GM12878 (cell line): ENCODE measurements at regions of chr15 and their contacts with region 1.

Region 1: DNA sequence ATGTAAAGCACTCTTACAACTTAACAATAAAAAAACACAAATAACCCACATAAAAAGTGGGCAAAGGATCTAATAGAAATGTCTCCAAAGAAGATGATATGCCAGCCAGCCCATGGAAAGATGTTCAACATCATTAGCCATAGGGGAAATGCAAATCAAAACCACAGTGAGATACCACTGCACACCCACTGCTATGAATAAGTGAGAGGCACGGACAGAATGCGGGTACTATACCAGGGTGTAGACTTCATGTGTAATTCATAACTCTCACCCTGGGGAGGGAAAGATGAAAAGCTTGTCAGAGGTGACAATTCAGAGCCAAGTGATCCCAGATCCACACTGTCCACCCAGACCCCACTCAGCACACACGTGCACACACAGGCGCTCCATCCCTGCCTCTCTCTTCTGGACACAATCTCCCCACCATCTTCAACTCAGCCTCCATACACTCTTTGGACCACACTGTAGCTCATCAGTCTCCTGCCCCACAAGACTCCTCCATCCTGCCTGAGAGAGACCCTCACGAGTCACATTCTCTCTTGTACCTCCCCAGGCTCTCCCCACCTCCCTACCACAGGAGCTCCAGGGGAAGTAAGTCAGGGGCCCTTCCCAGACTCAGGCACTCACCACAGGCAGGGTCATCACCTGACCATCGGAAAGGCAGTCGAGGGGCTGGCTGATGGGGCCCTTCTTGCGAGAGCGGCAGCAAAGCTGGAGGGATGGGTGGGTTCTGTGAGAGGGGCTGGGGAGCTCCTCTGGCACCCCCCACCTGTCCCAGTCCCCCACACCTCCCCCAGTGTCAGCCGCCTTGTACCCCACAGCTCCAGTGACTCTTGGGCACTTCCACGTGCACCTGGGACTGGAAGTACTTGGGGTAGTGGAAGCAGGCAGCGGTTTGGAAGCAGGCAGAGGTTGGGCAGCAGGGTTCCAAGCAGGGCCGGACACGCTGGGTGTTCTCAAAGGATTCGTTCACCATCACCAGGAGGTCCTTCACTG is 21.3 kb downstream of the PLA2G4E start:
- DNase-seq: no peak
- ATAC-seq: peak; percentile 68
- H3K4me3 ChIP-seq: no peak overlapping the region
- H3K27ac ChIP-seq: no peak overlapping the region
- H3K4me1 ChIP-seq: no peaks in the 10 kb centered on the region
- H3K27me3 ChIP-seq: no peaks in the 10 kb centered on the region
- CTCF ChIP-seq: no peak
- EP300 ChIP-seq: no peak
- POLR2A ChIP-seq: no peak
- RAD21 ChIP-seq: no peak

Region 2: DNA sequence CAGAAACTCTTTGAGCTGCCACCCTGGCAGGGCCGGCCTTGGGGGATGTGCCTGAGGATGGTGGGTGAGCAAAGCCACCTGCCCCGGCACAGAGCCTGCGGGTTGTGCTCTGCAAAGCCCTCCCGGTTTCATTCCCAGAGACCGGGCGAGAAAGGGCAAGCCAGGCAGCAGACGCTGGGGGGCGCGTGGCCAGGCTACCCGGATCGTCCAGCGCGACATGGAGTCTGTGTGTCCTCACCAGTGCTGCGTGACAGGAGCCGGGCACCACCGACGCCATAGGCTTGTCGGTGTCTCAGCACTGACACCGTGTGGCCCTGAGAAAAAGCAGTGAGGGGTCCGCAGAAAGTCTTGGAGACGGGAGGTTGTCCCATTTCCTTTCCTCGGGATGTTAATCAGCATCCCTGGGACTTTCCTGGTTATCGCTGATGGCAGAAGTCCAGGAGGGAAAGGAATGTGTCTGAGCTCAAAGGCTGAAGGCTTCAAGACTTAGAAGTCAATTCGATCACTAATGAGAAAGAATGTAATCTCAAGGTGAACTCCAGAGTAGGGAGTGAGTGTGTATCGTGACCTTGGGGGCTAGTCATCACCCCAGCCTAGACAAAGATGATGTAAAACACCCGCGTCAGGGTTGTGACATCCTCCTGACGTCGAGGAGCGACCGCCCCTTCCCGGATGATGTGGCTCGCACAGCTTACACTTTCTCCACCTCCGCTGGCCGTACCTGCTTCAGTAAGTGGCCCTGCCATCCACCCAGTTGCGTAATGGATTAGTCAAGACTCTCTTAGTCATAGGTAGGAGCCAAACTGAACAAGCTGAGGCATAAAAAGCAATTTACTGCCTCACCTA is 57.6 kb after region 1 on chr15:
- CTCF ChIA-PET with region 1: interaction called, 137 read pairs
- POLR2A ChIA-PET with region 1: no interaction called
- RAD21 ChIA-PET with region 1: interaction called, 4 read pairs
- SMC1A ChIA-PET with region 1: interaction called, 13 read pairs
- in situ Hi-C with region 1: loop called (anchors 5 kb)
- intact Hi-C with region 1: no loop called
- DNase-seq: no peak
- ATAC-seq: peak; percentile 98
- H3K4me3 ChIP-seq: no peak overlapping the region
- H3K27ac ChIP-seq: no peak overlapping the region
- H3K4me1 ChIP-seq: peaks cover 4% of the 10 kb centered on the region; the same call in 1 of the 2 replicates
- H3K27me3 ChIP-seq: peaks cover 0 to 4% of the 10 kb centered on the region in 2 experiments; a peak in 2 of 4 replicates
- CTCF ChIP-seq: peak; percentile 67 to 80 (median 74)
- EP300 ChIP-seq: no peak
- POLR2A ChIP-seq: no peak
- RAD21 ChIP-seq: peak; percentile 69